A673 (cell line): ENCODE measurements at regions of chr1 and their contacts with region 1.

Region 1: GRCh38 chr1:161192476-161193465 is 6.1 kb downstream of the ADAMTS4 start:
- DNase-seq: peak; percentile 85
- H3K4me3 ChIP-seq: no peak overlapping the region
- H3K27ac ChIP-seq: no peak overlapping the region
- H3K4me1 ChIP-seq: peaks cover 21% of the 10 kb centered on the region
- H3K27me3 ChIP-seq: no peaks in the 10 kb centered on the region
- CTCF ChIP-seq: peak; percentile 91

Region 2: GRCh38 chr1:160726498-160727315 is 466.1 kb before region 1 on chr1:
- CTCF ChIA-PET with region 1: no interaction called
- POLR2A ChIA-PET with region 1: no interaction called
- intact Hi-C with region 1: no loop called
- DNase-seq: peak; percentile 84
- H3K4me3 ChIP-seq: no peak overlapping the region
- H3K27ac ChIP-seq: no peak overlapping the region
- H3K4me1 ChIP-seq: no peaks in the 10 kb centered on the region
- H3K27me3 ChIP-seq: no peaks in the 10 kb centered on the region
- CTCF ChIP-seq: peak; percentile 92

Region 3: DNA sequence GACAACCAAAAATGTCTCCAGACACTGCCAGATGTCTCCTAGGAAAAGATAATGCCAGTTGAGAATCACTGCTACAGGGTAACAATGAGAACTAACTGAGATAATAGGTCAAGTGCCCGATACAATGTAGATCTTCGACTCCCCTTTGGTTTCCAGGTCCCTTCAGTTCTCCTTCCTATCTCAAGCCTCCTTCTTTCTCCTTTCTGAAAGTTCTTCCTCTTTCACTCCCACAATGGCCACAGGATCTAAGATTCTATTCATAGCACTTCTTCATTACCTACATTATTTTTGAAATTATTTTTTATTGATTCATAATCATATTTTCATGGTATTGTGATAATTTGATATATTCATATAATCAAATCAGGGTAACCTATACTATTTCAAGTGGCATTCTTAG is 81.2 kb before region 1 on chr1:
- CTCF ChIA-PET with region 1: no interaction called
- POLR2A ChIA-PET with region 1: interaction called, 13 read pairs
- intact Hi-C with region 1: no loop called
- DNase-seq: no peak
- H3K4me3 ChIP-seq: no peak overlapping the region
- H3K27ac ChIP-seq: no peak overlapping the region
- H3K4me1 ChIP-seq: no peaks in the 10 kb centered on the region
- H3K27me3 ChIP-seq: no peaks in the 10 kb centered on the region
- CTCF ChIP-seq: no peak